GM12878 (cell line): ENCODE measurements at regions of chr3 and their contacts with region 1.

Region 1: DNA sequence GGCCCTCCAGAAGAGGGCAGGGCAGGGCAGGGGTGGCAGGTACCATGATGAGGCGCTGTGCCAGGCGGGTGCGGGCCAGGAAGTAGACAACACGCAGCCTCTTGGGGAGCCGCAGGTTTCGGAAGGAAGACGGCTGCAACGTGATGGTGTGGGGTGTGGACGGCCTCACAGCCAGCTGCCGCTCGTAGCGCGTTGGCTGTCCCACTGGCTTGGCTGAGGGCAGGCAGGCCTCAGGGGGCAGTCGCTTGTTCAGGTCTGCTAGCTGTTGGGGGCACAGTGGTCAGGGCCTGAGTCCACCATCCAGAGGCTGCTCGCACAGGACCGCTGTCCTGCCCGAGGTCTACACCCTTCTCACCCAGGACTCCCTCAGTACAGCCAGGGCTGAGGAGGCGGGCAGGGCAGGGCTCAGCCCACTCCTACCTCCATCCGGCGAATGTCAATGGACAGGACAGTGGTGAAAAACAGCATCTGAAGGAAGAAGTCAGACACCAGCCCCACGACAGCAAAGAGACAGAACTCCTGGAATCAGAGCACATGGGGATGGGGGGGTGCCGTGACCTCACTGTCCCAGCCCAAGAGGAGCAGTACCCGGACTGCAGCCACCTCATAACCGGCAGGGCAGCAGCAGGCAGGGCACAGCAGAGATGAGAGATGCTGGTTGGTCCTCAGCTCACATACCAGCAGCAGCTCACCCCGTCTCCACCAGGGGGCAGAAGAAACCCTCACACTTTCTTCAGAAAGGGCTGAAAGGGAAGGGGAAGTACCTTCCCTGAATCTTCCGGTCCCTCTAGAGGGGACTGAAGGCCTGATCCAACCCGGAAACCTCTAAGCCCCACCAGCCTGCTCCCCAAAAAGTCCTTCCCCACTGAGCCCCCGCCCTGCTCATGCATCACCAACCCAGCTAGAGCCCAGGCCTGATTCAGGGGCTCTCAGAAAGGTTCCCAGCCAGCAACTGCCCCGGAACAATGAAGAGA is 40.0 kb downstream of the PTPN23 start:
- DNase-seq: peak; percentile 65
- ATAC-seq: peak; percentile 97
- H3K4me3 ChIP-seq: no peak overlapping the region
- H3K27ac ChIP-seq: peak overlapping the region; percentile 81
- H3K4me1 ChIP-seq: peaks cover 3% of the 10 kb centered on the region; the same call in 1 of the 2 replicates
- H3K27me3 ChIP-seq: no peaks in the 10 kb centered on the region
- CTCF ChIP-seq: peak; percentile 94 to 96 (median 96)
- EP300 ChIP-seq: no peak
- POLR2A ChIP-seq: no peak
- RAD21 ChIP-seq: peak; percentile 89

Region 2: DNA sequence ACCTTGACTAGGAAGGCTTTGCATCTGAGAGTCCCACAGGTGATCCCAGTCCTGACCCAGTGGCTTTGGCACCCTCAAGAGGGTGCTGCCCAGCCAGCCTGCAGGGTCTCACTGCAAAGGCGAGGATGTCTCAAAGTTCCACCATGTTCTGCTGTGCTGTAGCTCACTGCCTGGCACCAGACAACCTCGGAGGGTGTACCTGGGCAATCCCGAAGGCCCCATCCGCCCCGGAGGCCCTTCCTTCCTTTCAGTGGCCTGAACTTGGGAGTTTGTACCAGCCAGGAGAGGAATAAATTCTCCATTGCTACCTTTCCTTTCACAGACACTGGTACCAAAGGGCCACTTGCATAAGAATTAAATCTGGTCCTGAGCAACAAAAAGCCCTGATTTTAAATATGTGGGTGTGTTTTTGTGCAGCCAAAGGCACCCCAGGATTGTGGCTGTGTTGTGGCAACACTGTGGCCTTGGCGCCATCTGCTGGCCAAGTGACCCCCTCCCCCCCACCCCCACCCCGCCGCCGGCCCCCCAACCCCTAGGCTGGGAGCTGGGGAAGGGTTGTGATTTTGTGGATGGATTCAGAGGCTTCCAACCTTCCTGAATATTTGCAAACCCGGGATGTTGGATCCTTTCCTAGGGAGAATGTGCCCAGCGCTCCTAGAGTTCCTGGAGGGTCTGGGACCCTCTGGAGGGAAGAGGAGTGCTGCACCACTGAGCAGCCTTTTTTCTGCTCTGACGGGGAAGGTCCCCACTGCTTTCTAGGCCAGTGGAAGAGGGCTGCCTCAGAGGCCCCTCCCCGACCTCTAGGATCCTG is 49.7 kb before region 1 on chr3:
- CTCF ChIA-PET with region 1: no interaction called
- POLR2A ChIA-PET with region 1: no interaction called
- RAD21 ChIA-PET with region 1: no interaction called
- SMC1A ChIA-PET with region 1: no interaction called
- in situ Hi-C with region 1: no loop called
- intact Hi-C with region 1: no loop called
- DNase-seq: no peak
- ATAC-seq: peak; percentile 87
- H3K4me3 ChIP-seq: no peak overlapping the region
- H3K27ac ChIP-seq: no peak overlapping the region
- H3K4me1 ChIP-seq: no peaks in the 10 kb centered on the region
- H3K27me3 ChIP-seq: no peaks in the 10 kb centered on the region
- CTCF ChIP-seq: peak; percentile 34 to 52 (median 43); a peak in 4 of 6 replicates
- EP300 ChIP-seq: no peak
- POLR2A ChIP-seq: no peak
- RAD21 ChIP-seq: peak; percentile 54

Region 3: DNA sequence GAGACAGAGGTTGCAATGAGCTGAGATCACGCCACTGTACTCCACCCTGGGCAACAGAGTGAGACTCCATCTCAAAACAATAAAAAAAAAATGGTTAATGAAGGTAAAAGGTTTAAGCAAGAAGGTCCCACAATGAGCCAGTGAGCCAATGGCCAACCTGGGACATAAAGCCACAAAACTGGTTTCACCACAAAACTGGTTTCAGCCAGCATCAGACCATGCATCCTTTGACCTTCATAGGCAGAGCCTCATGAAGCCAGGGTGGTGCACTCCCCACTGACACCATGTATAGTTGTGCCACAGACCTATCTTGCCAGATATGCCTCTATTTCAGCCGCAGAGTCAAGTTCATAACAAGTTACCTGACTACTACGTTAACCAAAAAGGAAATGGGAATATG is 13.0 kb after region 1 on chr3:
- CTCF ChIA-PET with region 1: interaction called, 21 read pairs
- POLR2A ChIA-PET with region 1: no interaction called
- RAD21 ChIA-PET with region 1: interaction called, 4 read pairs
- SMC1A ChIA-PET with region 1: interaction called, 3 read pairs
- in situ Hi-C with region 1: no loop called
- intact Hi-C with region 1: no loop called
- DNase-seq: no peak
- ATAC-seq: no peak
- H3K4me3 ChIP-seq: no peak overlapping the region
- H3K27ac ChIP-seq: no peak overlapping the region
- H3K4me1 ChIP-seq: no peaks in the 10 kb centered on the region
- H3K27me3 ChIP-seq: no peaks in the 10 kb centered on the region
- CTCF ChIP-seq: no peak
- EP300 ChIP-seq: no peak
- POLR2A ChIP-seq: no peak
- RAD21 ChIP-seq: no peak

Region 4: DNA sequence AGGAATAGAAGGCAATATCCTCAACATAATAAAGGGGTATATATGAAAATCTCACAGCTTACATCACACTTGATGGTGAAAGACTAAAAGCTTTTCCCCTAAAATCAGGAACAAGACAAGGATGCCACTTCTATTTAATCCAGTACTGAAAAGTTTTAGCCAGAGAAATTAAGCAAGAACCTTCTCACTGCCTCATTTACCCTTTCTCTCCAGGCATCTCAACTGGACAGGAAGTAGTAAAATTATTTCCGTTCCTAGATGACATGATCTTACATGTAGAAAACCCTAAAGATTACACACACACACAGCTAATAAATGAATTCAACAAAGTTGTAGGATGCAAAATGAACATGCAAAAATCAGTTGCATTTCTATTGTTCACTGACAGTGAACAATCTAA is 43.8 kb after region 1 on chr3:
- CTCF ChIA-PET with region 1: interaction called, 24 read pairs
- POLR2A ChIA-PET with region 1: interaction called, 3 read pairs
- RAD21 ChIA-PET with region 1: interaction called, 8 read pairs
- SMC1A ChIA-PET with region 1: interaction called, 21 read pairs
- in situ Hi-C with region 1: no loop called
- intact Hi-C with region 1: no loop called
- DNase-seq: no peak
- ATAC-seq: no peak
- H3K4me3 ChIP-seq: no peak overlapping the region
- H3K27ac ChIP-seq: no peak overlapping the region
- H3K4me1 ChIP-seq: peaks cover 20% of the 10 kb centered on the region
- H3K27me3 ChIP-seq: no peaks in the 10 kb centered on the region
- CTCF ChIP-seq: no peak
- EP300 ChIP-seq: no peak
- POLR2A ChIP-seq: no peak
- RAD21 ChIP-seq: no peak

Region 5: DNA sequence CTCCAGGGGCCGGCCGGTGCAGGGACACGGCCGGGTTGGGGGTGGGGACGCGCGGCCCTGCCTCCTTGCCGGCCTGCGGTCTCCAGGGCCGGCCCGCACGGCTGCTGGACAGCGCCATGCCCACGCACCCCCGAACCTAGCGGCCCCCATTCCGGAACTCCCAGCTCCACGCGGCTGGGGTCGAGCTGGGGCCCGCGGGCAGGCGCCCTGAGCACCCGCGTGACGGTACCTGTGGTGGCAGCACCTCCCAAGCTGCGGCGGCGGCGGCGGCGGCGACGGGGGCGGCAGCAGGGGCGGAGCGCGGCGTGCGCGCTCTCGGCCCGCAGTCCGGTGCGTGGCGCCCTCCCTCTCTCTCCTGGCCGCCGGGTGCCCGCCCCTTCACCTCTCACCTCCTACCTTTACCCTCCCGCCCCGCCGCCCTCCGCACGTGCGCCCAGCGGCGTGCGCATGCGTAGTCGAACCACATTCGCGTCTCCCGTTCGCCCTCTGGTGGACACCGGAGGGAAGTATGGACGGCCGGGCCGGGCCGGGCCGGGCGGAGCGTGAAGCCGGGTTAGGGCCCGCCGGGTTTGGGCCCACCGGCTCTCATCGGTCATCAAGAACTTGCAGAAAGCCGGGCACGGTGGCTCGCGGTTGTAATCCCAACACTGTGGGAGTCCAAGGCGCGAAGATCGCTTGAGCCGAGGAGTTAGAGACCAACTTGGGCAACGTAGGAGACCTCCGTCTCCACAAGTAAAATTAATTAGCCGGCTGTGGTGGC is 55.0 kb after region 1 on chr3 and contains the start of gene SCAP:
- CTCF ChIA-PET with region 1: interaction called, 118 read pairs
- POLR2A ChIA-PET with region 1: interaction called, 12 read pairs
- RAD21 ChIA-PET with region 1: interaction called, 47 read pairs
- SMC1A ChIA-PET with region 1: interaction called, 46 read pairs
- in situ Hi-C with region 1: loop called (anchors 5 kb)
- intact Hi-C with region 1: loop called (anchors 1 kb)
- DNase-seq: peak; percentile 80
- ATAC-seq: peak; percentile 93
- H3K4me3 ChIP-seq: peak within 1 kb of the TSS; percentile 83
- H3K27ac ChIP-seq: peak within 1 kb of the TSS; percentile 57
- H3K4me1 ChIP-seq: peaks cover 3% of the 10 kb centered on the region
- H3K27me3 ChIP-seq: no peaks in the 10 kb centered on the region
- CTCF ChIP-seq: peak; percentile 78 to 96 (median 80)
- EP300 ChIP-seq: no peak
- POLR2A ChIP-seq: peak; percentile 75
- RAD21 ChIP-seq: peak; percentile 55
- polyA plus RNA-seq, gene SCAP: 1.5 to 4.3 TPM

Region 6: GRCh38 chr3:47491186-47491585 is 70.4 kb after region 1 on chr3:
- CTCF ChIA-PET with region 1: interaction called, 10 read pairs
- POLR2A ChIA-PET with region 1: no interaction called
- RAD21 ChIA-PET with region 1: interaction called, 3 read pairs
- SMC1A ChIA-PET with region 1: no interaction called
- in situ Hi-C with region 1: no loop called
- intact Hi-C with region 1: no loop called
- DNase-seq: no peak
- ATAC-seq: peak; percentile 18
- H3K4me3 ChIP-seq: no peak overlapping the region
- H3K27ac ChIP-seq: peak overlapping the region; percentile 37
- H3K4me1 ChIP-seq: peaks cover 3% of the 10 kb centered on the region
- H3K27me3 ChIP-seq: no peaks in the 10 kb centered on the region
- CTCF ChIP-seq: no peak
- EP300 ChIP-seq: no peak
- POLR2A ChIP-seq: no peak
- RAD21 ChIP-seq: no peak

Region 7: DNA sequence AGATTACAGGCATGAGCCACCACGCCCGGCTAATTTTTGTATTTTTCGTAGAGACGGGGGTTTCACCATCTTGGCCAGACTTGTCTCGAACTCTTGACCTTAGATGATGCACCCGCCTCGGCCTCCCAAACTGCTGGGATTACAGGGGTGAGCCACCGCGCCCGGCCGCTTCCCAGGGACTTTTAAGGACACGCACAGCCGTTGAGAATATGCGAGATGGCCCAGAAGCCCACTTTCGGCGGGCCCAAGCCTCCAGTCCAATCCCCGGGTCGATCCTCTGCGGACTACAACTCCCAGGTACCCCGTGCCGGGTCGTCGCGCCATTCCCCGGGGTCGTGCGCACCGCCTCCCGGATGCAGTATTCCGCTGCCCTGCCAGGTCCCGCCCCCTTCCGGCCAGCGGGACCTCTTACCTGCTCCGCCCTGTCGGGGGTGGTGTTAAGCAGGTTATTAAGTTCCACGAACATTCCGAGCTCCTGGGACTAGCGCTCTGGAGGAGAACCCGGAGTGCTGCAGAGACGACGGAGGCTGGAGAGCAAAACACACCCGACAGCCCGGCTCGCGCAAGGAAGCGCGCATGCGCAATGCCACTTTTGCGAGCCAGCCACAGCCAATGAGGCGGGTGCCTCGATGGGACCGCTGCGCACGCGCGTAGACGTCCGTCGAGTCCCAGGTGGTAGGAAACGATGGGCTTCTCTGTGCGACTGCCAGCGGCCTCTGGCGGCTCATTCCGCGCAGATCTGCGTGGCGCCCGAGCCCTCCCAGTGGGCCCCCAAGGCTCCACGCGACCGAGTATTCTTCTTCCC is 92.5 kb after region 1 on chr3 and contains the start of gene ELP6:
- CTCF ChIA-PET with region 1: interaction called, 53 read pairs
- POLR2A ChIA-PET with region 1: interaction called, 5 read pairs
- RAD21 ChIA-PET with region 1: interaction called, 8 read pairs
- SMC1A ChIA-PET with region 1: interaction called, 11 read pairs
- in situ Hi-C with region 1: loop called (anchors 5 kb)
- intact Hi-C with region 1: loop called (anchors 1 kb)
- DNase-seq: peak; percentile 88
- ATAC-seq: peak; percentile 99
- H3K4me3 ChIP-seq: peak within 1 kb of the TSS; percentile 73
- H3K27ac ChIP-seq: peak within 1 kb of the TSS; percentile 99
- H3K4me1 ChIP-seq: peaks cover 6% of the 10 kb centered on the region; the same call in 1 of the 2 replicates
- H3K27me3 ChIP-seq: no peaks in the 10 kb centered on the region
- CTCF ChIP-seq: peak; percentile 75 to 82 (median 81)
- EP300 ChIP-seq: no peak
- POLR2A ChIP-seq: peak; percentile 94
- RAD21 ChIP-seq: peak; percentile 61
- polyA plus RNA-seq, gene ELP6: 46.4 to 51.1 TPM

Region 8: DNA sequence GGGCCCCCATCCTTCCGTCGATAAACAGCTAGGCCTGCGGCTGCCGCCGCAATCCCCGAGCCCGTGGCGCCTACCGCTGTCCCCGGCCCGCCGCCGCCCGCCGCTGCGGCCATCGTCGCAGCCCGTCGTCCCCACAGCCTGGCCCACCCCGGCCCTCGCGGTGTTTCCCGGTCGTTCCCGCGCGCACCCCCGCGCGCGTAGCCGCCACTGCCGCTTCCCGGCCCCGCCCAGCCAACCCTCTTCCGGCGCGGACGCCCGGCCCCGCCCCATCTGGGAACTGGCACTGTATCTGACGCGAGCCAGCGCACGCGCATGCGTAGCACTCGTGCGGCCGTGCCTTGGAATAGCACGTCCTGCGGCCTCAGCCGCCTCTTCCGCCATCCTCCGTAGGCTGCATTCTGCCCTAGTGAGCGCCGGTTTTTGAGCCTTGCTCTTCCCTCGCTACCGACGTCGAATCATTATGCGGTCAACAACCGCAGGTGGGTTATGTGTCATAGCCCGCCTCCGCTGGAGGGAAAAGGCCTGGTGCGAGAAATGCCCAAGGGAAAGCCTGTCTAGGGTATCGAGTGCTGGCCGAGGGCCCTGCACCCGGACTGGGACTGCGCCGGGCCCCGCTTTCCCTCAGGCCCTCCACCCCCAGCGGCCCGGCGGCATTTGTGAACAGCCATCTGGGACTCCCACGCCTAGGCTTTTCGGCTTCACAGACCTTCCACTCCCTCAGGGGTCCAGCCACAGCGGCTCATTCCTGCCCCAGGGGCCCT is 361.1 kb after region 1 on chr3 and contains the start of gene SMARCC1:
- CTCF ChIA-PET with region 1: interaction called, 3 read pairs
- POLR2A ChIA-PET with region 1: no interaction called
- RAD21 ChIA-PET with region 1: no interaction called
- SMC1A ChIA-PET with region 1: no interaction called
- in situ Hi-C with region 1: loop called (anchors 5 kb)
- intact Hi-C with region 1: loop called (anchors 5 kb)
- DNase-seq: peak; percentile 94
- ATAC-seq: peak; percentile 86
- H3K4me3 ChIP-seq: peak within 1 kb of the TSS; percentile 94
- H3K27ac ChIP-seq: peak within 1 kb of the TSS; percentile 97
- H3K4me1 ChIP-seq: peaks cover 5% of the 10 kb centered on the region
- H3K27me3 ChIP-seq: no peaks in the 10 kb centered on the region
- CTCF ChIP-seq: 0 out of 6 replicates have a peak, but pooled peaks of 1 of the 3 experiments have one; percentile 6
- EP300 ChIP-seq: peak; percentile 41 to 73; a peak in 2 of 4 replicates
- POLR2A ChIP-seq: peak; percentile 96
- RAD21 ChIP-seq: no peak
- polyA plus RNA-seq, gene SMARCC1: 26.6 to 29.2 TPM

Region 9: GRCh38 chr3:48180531-48181253 is 759.9 kb after region 1 on chr3:
- CTCF ChIA-PET with region 1: no interaction called
- POLR2A ChIA-PET with region 1: no interaction called
- RAD21 ChIA-PET with region 1: no interaction called
- SMC1A ChIA-PET with region 1: no interaction called
- in situ Hi-C with region 1: no loop called
- intact Hi-C with region 1: no loop called
- DNase-seq: no peak
- ATAC-seq: peak; percentile 71
- H3K4me3 ChIP-seq: no peak overlapping the region
- H3K27ac ChIP-seq: no peak overlapping the region
- H3K4me1 ChIP-seq: peaks cover 4% of the 10 kb centered on the region; the same call in 1 of the 2 replicates
- H3K27me3 ChIP-seq: no peaks in the 10 kb centered on the region
- CTCF ChIP-seq: no peak
- EP300 ChIP-seq: no peak
- POLR2A ChIP-seq: no peak
- RAD21 ChIP-seq: no peak